ENCODE measurements at regions of chr18 and their contacts with region 1.

Region 1: DNA sequence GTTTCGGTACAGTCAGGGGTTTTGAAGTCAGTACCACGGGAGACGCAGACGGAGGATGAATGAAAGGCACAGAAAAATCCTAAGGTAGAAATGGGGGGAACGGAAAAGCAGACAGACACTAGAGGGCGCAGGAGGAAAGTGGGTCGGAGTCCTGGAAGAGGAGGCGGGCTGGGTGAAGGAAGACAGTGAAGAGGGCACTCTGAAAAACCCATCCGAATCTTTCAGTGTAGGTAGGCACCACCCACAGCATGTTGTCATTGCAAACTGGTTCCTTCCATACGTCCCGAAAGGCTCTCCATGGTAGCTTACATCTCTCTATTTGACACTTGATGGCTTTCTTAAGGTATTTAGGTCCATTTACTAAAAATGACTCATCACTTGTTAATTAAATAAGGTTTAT is 18.5 kb upstream of the ZNF236 start:
- DNase-seq: peak in 6 of 10 donors; percentile 30 to 64 (median 58)
- H3K4me3 ChIP-seq: peak overlapping the region in 11 of 59 donors; percentile 5 to 35 (median 16)
- H3K27ac ChIP-seq: no peak overlapping the region
- H3K27me3 ChIP-seq: no peaks in the 10 kb centered on the region
- CTCF ChIP-seq: peak; percentile 56 to 85 (median 74)

Region 2: GRCh38 chr18:76875390-76876325 is 71.8 kb after region 1 on chr18:
- intact Hi-C with region 1: loop called in 1 of 2 experiments (anchors 5 kb)
- DNase-seq: peak in 3 of 10 donors; percentile 36 to 66 (median 60)
- H3K4me3 ChIP-seq: peak overlapping the region in 5 of 59 donors; percentile 3 to 31 (median 18)
- H3K27ac ChIP-seq: peak overlapping the region in 5 of 59 donors; percentile 1 to 62 (median 35)
- H3K27me3 ChIP-seq: no peaks in the 10 kb centered on the region
- CTCF ChIP-seq: peak; percentile 55 to 81 (median 70)

Region 3: GRCh38 chr18:76982841-76983587 is 179.2 kb after region 1 on chr18:
- intact Hi-C with region 1: loop called in 1 of 2 experiments (anchors 5 kb)
- DNase-seq: peak; percentile 77 to 88 (median 82)
- H3K4me3 ChIP-seq: peak overlapping the region in 12 of 59 donors; percentile 18 to 42 (median 34)
- H3K27ac ChIP-seq: peak overlapping the region in 40 of 59 donors; percentile 6 to 93 (median 62)
- H3K27me3 ChIP-seq: no peaks in the 10 kb centered on the region
- CTCF ChIP-seq: peak; percentile 79 to 96 (median 88)

Region 4: GRCh38 chr18:77207540-77207939 is 403.7 kb after region 1 on chr18:
- intact Hi-C with region 1: loop called (anchors 5 kb)
- DNase-seq: peak in 1 of 10 donors; percentile 44
- H3K4me3 ChIP-seq: peak overlapping the region in 23 of 59 donors; percentile 1 to 51 (median 20)
- H3K27ac ChIP-seq: peak overlapping the region in 3 of 59 donors; percentile 17 to 54 (median 36)
- H3K27me3 ChIP-seq: no peaks in the 10 kb centered on the region
- CTCF ChIP-seq: peak in 55 of 56 donors; percentile 14 to 74 (median 55)

Measured in dorsolateral prefrontal cortex (tissue), 120 donors.